Activated CD4-positive, alpha-beta memory T cell treated with anti-CD3 and anti-CD28 coated beads for 36 hours (primary cell): ENCODE measurements at regions of chr16 and their contacts with region 1.

Region 1: GRCh38 chr16:46973207-46973995 is at the start of gene DNAJA2:
- DNase-seq: peak; percentile 94
- H3K4me3 Mint-ChIP-seq: peak within 1 kb of the TSS; percentile 98
- H3K27ac Mint-ChIP-seq: peak within 1 kb of the TSS; percentile 98
- H3K4me1 Mint-ChIP-seq: peaks cover 59% of the 10 kb centered on the region
- H3K27me3 Mint-ChIP-seq: no peaks in the 10 kb centered on the region
- total RNA-seq, gene DNAJA2: 78.9 to 80.6 TPM

Region 2: DNA sequence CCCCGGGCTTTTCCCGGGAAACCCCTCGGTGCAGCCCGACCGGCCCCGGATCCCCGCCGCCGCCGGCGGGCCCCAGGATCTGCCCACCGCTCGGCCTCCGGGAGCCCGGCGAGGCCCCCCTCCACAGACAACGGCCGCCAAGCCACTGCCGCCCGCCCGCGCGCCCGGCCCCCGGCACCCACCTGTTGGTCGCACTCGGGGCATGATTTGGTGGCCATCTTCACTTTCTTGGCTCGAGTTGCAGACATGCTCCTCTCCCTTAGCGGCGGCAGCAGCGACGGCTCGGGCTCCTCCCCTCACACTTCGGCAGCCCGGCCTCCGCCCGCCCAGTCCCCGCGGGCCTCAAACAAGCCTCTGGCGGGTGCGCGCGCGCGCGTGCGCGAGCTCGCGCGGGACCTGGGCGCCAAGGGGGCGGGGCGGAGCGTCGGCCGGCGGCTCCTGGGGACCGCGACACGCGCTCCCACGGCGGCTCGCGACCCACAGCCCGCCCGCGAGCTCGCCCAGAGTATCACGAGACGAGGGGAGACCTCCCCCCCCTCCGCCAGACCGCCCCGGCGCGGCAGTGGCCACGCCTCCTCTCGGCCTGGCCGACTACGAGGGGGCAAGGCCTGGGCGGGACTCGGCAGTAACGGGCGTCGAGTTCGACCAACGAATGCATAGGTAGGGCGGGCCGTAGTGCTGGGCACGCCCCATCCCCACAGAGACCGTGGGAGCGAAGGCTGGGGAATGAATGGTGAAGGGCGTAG is 142.3 kb before region 1 on chr16 and contains the start of gene C16orf87:
- CTCF ChIA-PET with region 1: no interaction called
- POLR2A ChIA-PET with region 1: interaction called, 3 read pairs
- intact Hi-C with region 1: loop called (anchors 2 kb)
- DNase-seq: peak; percentile 93
- H3K4me3 Mint-ChIP-seq: peak within 1 kb of the TSS; percentile 90
- H3K27ac Mint-ChIP-seq: peak within 1 kb of the TSS; percentile 97
- H3K4me1 Mint-ChIP-seq: peaks cover 33% of the 10 kb centered on the region
- H3K27me3 Mint-ChIP-seq: no peaks in the 10 kb centered on the region
- total RNA-seq, gene C16orf87: 18.1 to 18.2 TPM

Region 3: GRCh38 chr16:46961373-46962353 is 11.7 kb before region 1 on chr16:
- CTCF ChIA-PET with region 1: interaction called, 3 read pairs
- POLR2A ChIA-PET with region 1: interaction called, 32 read pairs
- intact Hi-C with region 1: loop called (anchors 1 kb)
- DNase-seq: peak; percentile 68
- H3K4me3 Mint-ChIP-seq: no peak overlapping the region
- H3K27ac Mint-ChIP-seq: peak overlapping the region; percentile 86
- H3K4me1 Mint-ChIP-seq: peaks cover 38% of the 10 kb centered on the region
- H3K27me3 Mint-ChIP-seq: no peaks in the 10 kb centered on the region

Region 4: GRCh38 chr16:47037746-47038458 is 64.5 kb after region 1 on chr16:
- CTCF ChIA-PET with region 1: interaction called, 13 read pairs
- POLR2A ChIA-PET with region 1: interaction called, 5 read pairs
- intact Hi-C with region 1: loop called (anchors 5 kb)
- DNase-seq: peak; percentile 92
- H3K4me3 Mint-ChIP-seq: peak overlapping the region; percentile 71
- H3K27ac Mint-ChIP-seq: no peak overlapping the region
- H3K4me1 Mint-ChIP-seq: peaks cover 6% of the 10 kb centered on the region
- H3K27me3 Mint-ChIP-seq: peaks cover 4% of the 10 kb centered on the region

Region 5: GRCh38 chr16:47132310-47132709 is 158.9 kb after region 1 on chr16:
- CTCF ChIA-PET with region 1: no interaction called
- POLR2A ChIA-PET with region 1: no interaction called
- intact Hi-C with region 1: no loop called
- DNase-seq: no peak
- H3K4me3 Mint-ChIP-seq: no peak overlapping the region
- H3K27ac Mint-ChIP-seq: no peak overlapping the region
- H3K4me1 Mint-ChIP-seq: peaks cover 30% of the 10 kb centered on the region
- H3K27me3 Mint-ChIP-seq: no peaks in the 10 kb centered on the region

Region 6: GRCh38 chr16:47460711-47461597 is 487.6 kb after region 1 on chr16 and contains the starts of genes ITFG1 and PHKB:
- CTCF ChIA-PET with region 1: interaction called, 3 read pairs
- POLR2A ChIA-PET with region 1: interaction called, 12 read pairs
- intact Hi-C with region 1: loop called (anchors 2 kb)
- DNase-seq: peak; percentile 96
- H3K4me3 Mint-ChIP-seq: peak within 1 kb of the TSS; percentile 93
- H3K27ac Mint-ChIP-seq: peak within 1 kb of the TSS; percentile 95
- H3K4me1 Mint-ChIP-seq: peaks cover 53% of the 10 kb centered on the region
- H3K27me3 Mint-ChIP-seq: no peaks in the 10 kb centered on the region
- total RNA-seq, gene ITFG1: 20.6 to 22.0 TPM
- total RNA-seq, gene PHKB: 27.6 to 28.8 TPM